ENCODE measurements at regions of chr3 and their contacts with region 1.

Region 1: DNA sequence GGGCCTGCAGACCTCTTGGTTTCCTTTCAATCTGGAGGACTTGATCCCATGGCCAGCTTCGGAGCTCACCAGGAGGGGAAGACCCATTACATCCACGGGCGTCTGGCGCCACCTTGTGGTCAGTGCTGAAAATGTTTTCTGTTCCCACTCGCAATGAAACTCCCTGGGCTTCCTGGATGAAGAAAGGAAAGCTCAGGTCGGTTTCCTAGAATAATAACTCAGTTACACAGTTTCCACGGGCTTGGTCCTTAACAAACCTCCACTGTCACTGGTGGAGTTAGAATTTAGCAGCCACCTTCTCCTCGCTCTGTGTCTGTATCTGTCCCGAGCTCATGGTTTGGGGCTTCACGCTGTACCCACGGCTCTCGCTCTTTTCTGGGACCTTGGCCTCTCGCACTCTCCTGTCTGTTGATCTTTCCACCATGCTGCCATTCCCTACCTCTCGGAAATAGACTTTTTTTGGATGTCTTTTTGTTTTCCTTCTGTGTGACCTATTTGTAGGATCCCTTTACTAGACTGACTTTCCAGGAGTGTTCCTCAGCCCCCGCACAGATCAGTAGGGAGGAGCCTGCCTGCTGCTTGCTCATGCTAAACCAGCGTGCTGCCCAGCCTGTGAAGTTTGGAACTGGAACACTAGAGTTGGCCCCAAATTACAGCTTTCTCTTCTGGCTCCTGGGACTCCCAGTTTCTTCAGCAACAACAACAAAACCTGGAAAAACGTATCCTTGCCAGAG is 56.3 kb downstream of the IL20RB start:
- DNase-seq: peak; percentile 77 to 82
- ATAC-seq: peak; percentile 93 to 97
- H3K4me3 ChIP-seq: peak overlapping the region; percentile 28
- H3K27ac ChIP-seq: peak overlapping the region; percentile 47 to 78
- H3K4me1 ChIP-seq: no peaks in the 10 kb centered on the region
- CTCF ChIP-seq: peak; percentile 80
- EP300 ChIP-seq: no peak
- POLR2A ChIP-seq: no peak
- RAD21 ChIP-seq: peak; percentile 95 to 96

Region 2: GRCh38 chr3:136075218-136075808 is 938.8 kb before region 1 on chr3:
- CTCF ChIA-PET with region 1: interaction called, 18 read pairs
- POLR2A ChIA-PET with region 1: no interaction called
- DNase-seq: peak; percentile 5 to 70
- ATAC-seq: peak in 1 of 2 experiments; percentile 70; a peak in 3 of 6 replicates
- H3K4me3 ChIP-seq: no peak overlapping the region
- H3K27ac ChIP-seq: no peak overlapping the region
- H3K4me1 ChIP-seq: peaks cover 18% of the 10 kb centered on the region; the same call in 2 of the 3 replicates
- CTCF ChIP-seq: peak; percentile 88
- EP300 ChIP-seq: no peak
- POLR2A ChIP-seq: no peak
- RAD21 ChIP-seq: peak; percentile 93 to 96

Region 3: GRCh38 chr3:136390574-136390973 is 623.5 kb before region 1 on chr3:
- CTCF ChIA-PET with region 1: interaction called, 14 read pairs
- POLR2A ChIA-PET with region 1: interaction called, 4 read pairs
- DNase-seq: no peak
- ATAC-seq: no peak
- H3K4me3 ChIP-seq: no peak overlapping the region
- H3K27ac ChIP-seq: no peak overlapping the region
- H3K4me1 ChIP-seq: no peaks in the 10 kb centered on the region
- CTCF ChIP-seq: no peak
- EP300 ChIP-seq: no peak
- POLR2A ChIP-seq: no peak
- RAD21 ChIP-seq: no peak

Region 4: DNA sequence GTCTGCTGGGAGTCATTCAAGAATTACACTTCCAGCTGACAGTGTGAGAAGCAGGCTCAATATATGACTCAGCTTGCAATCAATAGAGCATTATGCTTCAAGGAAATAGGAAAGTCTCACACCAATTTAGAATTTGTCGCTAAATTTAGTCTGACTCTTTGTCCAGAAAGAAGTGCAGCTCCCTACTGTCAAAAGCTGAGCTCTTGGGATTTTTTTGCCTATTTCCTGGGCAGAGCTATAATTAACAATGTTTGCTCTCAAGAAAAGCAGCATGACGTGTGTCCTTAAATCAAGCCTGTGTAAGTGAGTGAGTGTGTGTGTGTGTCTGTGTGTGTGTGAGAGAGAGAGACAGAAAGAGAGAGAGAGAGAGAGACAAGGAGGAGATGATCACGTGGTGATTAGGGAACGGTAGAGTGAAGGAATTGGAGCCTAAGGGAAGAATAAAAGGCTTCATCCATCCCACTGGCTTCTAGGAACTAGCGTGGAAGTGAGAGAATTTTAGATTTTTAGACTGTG is 211.6 kb before region 1 on chr3:
- CTCF ChIA-PET with region 1: no interaction called
- POLR2A ChIA-PET with region 1: no interaction called
- DNase-seq: no peak
- ATAC-seq: no peak
- H3K4me3 ChIP-seq: no peak overlapping the region
- H3K27ac ChIP-seq: no peak overlapping the region
- H3K4me1 ChIP-seq: no peaks in the 10 kb centered on the region; the same call in 2 of the 3 replicates
- CTCF ChIP-seq: no peak
- EP300 ChIP-seq: no peak
- POLR2A ChIP-seq: no peak
- RAD21 ChIP-seq: no peak

Region 5: DNA sequence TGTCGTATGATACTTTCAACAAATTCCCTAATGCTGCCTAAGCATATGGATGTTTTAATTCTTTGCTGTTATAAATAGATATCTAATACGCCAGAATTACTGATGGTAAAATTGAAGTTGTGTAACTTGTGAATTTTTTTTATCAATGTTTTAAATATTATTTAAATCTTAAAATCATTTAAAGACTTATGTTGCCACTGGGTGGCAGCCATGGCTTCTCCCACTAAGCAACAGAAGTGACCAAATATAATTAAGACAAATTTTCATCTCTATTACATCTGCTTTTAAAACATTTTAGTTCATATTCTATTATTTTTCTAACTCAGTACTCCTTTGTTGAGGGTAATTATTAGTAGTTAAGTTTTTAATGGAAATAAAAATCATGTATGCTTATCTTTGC is 64.4 kb before region 1 on chr3:
- CTCF ChIA-PET with region 1: interaction called, 19 read pairs
- POLR2A ChIA-PET with region 1: no interaction called
- DNase-seq: no peak
- ATAC-seq: no peak
- H3K4me3 ChIP-seq: no peak overlapping the region
- H3K27ac ChIP-seq: no peak overlapping the region
- H3K4me1 ChIP-seq: peaks cover 29% of the 10 kb centered on the region
- CTCF ChIP-seq: peak; percentile 39
- EP300 ChIP-seq: no peak
- POLR2A ChIP-seq: no peak
- RAD21 ChIP-seq: peak; percentile 23 to 43

Region 6: DNA sequence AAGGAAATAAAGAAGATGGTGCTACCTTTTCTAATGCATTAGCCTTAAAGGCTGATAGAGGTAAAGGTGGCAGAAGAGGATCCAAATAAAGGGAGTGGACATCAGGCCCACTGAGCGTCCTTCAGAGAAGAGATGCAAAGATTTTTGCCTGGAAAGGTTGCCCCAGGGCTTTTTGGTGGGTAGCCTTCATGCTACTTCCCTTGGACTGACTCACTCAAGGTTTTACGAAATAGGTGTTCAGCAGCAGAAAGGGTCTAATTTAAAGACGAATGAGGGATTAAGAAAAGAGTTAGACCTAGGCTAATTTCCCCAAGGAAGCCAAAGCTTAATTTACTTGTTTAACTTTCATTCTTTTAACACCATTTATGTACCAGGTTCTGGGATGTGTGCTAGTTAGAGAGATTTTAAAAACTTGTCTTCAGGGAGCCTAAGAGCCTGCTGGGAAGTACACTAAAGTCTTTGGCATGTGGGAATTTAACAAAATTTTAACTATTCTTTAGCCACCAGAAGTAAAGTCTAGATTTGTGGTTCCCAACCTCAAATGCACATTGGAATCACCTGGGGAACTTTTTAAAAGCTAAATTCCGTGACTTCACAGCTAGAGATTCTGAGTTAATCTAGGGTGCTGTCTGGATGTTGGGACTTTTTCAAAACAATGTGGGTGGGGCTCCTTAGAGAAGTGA is 53.1 kb before region 1 on chr3:
- CTCF ChIA-PET with region 1: interaction called, 10 read pairs
- POLR2A ChIA-PET with region 1: no interaction called
- DNase-seq: peak in 1 of 2 experiments; percentile 15
- ATAC-seq: peak; percentile 51 to 69; a peak in 4 of 6 replicates
- H3K4me3 ChIP-seq: no peak overlapping the region
- H3K27ac ChIP-seq: peak overlapping the region; percentile 63 to 84
- H3K4me1 ChIP-seq: peaks cover 62% of the 10 kb centered on the region
- CTCF ChIP-seq: no peak
- EP300 ChIP-seq: no peak
- POLR2A ChIP-seq: no peak
- RAD21 ChIP-seq: no peak

Region 7: GRCh38 chr3:137099364-137100219 is 85.5 kb after region 1 on chr3:
- CTCF ChIA-PET with region 1: no interaction called
- POLR2A ChIA-PET with region 1: no interaction called
- DNase-seq: no peak
- ATAC-seq: no peak
- H3K4me3 ChIP-seq: no peak overlapping the region
- H3K27ac ChIP-seq: no peak overlapping the region
- H3K4me1 ChIP-seq: no peaks in the 10 kb centered on the region
- CTCF ChIP-seq: no peak
- EP300 ChIP-seq: no peak
- POLR2A ChIP-seq: no peak
- RAD21 ChIP-seq: no peak